Head of caudate nucleus (tissue), 42 donors: ENCODE measurements at regions of chr11 and their contacts with region 1.

Region 1: DNA sequence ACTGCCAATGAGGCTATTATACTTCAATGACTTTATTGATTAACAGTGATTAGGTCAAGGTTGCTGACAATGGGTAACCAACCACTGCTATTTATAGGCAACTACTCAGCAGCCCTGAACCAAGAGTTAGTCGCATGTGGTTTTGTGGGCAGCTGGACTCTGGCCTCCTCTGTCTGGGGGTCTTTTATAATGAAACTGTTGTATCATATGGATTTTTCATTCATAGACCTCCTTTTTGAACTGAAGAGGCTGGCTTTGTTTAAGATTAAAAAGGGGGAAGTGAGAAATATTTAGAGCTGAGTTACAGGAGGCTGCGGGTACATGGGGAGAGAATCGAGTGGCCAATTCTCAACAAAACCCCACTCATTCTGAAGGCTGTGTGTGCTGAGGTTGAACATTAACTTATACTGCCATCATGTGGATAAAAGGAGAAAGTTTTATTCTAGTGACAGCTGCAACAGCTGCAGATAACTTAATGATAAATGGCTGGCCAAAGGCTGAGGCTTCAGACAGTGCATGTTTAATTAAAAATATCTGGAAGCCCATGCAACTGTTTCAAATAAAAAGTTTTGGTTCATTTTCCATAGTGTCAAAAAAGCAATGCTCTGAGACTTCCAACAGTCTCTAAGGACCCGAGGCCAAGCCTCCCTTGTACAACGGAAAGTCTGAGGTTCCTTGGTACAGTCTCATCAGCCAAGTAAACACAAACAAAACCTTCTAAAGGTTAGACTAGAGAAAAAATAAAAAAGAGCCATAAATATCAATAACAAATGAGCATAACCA is 682.6 kb downstream of the KCNA4 start:
- DNase-seq: peak in 2 of 42 donors; percentile 8 to 11

Region 2: DNA sequence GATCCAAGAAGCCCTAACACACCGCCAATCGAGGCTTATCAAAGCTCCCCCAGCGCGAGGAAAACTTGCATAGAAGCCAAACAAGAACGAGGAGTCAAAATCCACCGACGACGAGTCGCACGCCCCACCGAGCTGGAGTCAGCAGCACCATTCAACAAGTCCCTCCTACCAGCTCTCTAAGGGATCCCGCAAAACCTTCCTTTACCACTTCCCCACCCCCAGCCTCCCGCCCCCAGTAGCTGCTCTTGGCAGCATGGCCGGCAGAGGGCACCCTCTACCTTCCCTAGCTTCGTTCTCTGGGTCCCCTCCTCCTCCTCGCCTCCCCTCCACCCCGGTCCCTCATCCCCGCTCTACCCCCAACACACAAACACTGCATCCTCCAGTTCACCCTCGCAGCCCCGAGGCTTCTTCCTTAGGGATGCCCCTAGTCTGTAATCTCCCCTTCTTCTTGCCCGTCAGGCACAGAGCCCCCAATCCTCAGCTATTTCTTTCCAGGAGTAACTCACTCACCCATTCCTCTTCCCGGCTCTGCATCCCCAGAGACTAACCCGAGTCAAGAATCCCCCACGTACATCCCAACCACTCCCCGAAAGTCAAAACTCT is 1635.2 kb before region 1 on chr11:
- intact Hi-C with region 1: loop called (anchors 5 kb)
- DNase-seq: peak; percentile 60 to 90 (median 80)

Region 3: DNA sequence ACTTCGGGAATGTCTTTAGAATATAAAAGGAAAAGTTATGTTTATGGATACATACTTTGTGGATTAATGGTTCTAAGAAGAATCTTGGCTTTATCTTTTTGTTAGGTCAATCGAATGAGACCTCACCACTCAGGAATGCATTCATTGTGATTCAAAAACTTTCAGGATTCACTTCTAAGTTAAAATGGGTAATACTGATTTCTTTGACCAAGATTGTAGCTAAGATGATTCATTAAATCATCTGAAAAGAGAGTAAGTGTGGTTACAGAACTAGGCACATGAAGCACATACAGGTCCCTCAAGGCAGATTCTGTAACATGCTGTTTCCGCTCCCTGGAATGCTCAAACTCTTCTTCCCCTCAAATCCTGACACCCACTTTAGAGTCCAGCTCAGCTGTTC is 33.7 kb before region 1 on chr11:
- intact Hi-C with region 1: no loop called
- DNase-seq: no peak

Region 4: DNA sequence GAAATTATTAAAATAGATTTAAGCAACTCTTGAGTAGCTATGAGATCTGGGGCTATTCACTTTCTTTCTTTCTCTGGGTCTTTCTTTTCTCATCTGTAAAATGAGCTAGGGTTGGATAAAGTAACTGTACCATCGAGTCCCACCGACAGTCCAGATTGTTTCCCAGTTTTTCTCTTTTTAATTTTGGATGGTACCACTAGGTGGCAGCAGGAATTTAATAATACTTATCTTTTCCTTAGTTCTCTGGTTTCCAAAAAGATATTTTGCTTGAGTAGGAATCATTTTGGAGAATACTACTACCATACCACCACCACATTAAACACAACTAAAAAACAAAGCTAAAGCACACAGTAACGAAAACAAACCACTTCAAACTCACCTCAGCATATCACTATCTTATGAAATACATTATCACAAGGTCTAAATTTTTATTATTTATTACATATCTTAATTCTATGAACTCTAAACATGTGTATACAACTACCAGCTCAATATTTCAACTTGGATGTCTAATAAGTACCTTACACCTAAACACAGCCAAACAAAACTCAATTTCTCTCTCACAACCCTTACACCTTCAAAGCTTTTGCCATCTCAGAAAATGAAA is 98.6 kb after region 1 on chr11:
- intact Hi-C with region 1: no loop called
- DNase-seq: peak in 1 of 42 donors; percentile 28